AG04449 (cell line): ENCODE measurements at regions of chr9 and their contacts with region 1.

Region 1: GRCh38 chr9:92438900-92439526 is 14.7 kb upstream of the OMD start:
- DNase-seq: no peak
- H3K4me3 ChIP-seq: no peak overlapping the region
- CTCF ChIP-seq: no peak

Region 2: DNA sequence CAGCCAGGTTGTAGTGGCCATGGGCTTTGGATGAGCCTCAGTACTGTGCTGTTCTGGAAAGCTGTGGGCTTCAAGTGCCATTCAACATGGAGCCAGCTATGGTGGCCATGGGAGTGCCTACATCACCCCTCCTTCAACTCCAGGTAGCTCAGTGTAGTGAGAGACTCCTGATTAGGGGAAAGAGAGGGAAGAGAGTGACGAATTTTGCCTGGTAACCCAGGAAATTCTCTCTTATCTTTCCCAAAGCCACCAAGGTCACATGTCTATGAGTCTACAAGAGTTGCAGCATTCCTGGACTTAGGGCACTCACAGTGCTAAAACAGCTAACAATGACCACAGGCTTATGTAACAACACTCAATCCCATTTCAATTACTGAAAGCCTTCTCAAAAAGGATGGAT is 242.1 kb before region 1 on chr9:
- CTCF ChIA-PET with region 1: no interaction called
- POLR2A ChIA-PET with region 1: no interaction called
- DNase-seq: peak; percentile 7
- H3K4me3 ChIP-seq: no peak overlapping the region
- CTCF ChIP-seq: no peak

Region 3: DNA sequence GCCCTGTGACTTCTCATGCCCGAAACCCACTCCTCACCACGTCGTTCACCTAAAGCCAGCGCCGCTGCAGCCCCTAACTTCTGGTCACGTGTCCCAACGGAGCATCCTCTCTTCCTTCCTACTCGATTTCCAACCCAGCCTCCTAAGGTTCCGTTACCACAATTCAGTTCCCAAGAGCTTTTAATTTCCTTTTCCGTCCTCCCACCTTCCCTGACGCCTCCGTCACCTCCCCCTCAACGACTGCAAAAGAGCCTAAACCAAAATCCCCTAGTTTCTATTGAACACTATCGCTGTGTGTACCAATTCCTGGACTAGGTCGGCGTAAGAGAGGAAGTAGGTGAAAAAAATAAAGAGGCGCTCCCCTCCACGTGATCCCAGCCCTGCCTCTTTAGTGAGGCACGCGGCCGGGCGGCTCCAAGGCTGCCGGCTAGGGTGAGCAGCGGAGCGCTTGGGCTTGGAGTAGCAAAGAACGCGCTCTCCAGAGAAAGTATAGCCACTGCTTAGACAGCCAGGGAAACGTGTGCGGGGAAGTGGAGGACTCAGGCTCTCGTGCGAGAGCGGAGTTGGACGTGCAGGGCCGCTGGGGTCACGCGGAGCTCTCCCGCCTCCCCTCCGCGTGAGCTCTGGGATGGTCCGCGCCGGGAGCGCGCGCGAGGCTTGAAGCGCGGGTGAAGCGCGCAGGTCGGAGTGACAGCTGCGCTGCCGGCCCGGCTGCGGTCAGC is 113.6 kb before region 1 on chr9 and contains the starts of genes CENPP and NOL8:
- CTCF ChIA-PET with region 1: interaction called, 120 read pairs
- POLR2A ChIA-PET with region 1: no interaction called
- DNase-seq: peak; percentile 38
- H3K4me3 ChIP-seq: peak within 1 kb of the TSS; percentile 90
- CTCF ChIP-seq: no peak

Region 4: GRCh38 chr9:92342825-92343488 is 96.1 kb before region 1 on chr9:
- CTCF ChIA-PET with region 1: interaction called, 57 read pairs
- POLR2A ChIA-PET with region 1: no interaction called
- DNase-seq: no peak
- H3K4me3 ChIP-seq: no peak overlapping the region
- CTCF ChIP-seq: no peak